Dendritic cell treated with granulocyte-macrophage colony-stimulating factor and Interleukin-4, amounts not matched to agents 40 ng/mL and 50 ng/mL, for 4 days (primary cell): ENCODE measurements at regions of chr20 and their contacts with region 1.

Region 1: DNA sequence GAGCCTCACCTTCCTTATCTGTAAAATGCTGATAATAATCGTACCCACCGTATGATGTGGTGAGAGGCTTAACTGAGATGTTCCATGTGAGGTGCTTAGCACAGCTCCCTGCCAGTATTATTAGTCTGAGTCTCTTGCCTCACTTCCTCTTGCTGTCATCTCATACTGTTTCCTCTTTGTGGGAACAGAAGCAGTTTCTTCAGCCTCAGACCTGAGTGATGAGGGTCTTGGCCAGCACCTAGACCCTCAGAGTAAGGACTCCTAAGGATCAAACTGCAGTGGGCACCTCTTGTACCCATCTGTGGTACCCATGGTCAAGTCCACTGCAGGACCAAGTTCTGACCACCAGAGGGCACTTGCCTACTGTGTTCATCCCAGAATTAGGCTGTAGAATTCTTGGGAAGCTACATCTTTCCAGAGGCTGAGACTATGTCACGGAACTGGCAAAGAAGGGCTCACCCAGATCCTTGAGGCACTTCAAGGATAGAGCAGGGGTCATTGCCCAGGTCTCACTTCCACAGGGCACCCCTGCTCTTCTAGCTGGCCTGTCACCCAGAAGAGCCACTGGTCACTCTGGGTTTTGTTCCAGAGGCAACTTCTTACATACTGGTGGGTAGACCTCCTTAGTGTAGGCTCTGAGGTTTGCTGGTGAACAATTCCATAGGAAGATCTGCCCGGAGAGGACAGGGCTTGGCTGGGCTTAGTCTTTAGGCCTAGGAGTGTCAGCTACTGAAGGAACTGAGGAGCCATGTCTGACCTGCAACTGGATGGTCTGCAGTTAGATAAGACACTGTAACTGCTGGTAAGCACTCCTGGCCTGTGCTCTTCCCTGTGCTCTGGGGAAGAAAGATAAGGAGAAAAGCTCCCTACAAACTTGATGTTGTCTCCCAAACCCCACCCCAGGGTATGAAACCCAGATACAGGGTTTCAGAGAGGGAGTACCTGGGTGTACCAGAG is 20.6 kb upstream of the SGK2 start:
- H3K4me3 Mint-ChIP-seq: no peak overlapping the region
- H3K27ac Mint-ChIP-seq: no peak overlapping the region
- H3K4me1 Mint-ChIP-seq: peaks cover 5% of the 10 kb centered on the region
- H3K27me3 Mint-ChIP-seq: no peaks in the 10 kb centered on the region

Region 2: DNA sequence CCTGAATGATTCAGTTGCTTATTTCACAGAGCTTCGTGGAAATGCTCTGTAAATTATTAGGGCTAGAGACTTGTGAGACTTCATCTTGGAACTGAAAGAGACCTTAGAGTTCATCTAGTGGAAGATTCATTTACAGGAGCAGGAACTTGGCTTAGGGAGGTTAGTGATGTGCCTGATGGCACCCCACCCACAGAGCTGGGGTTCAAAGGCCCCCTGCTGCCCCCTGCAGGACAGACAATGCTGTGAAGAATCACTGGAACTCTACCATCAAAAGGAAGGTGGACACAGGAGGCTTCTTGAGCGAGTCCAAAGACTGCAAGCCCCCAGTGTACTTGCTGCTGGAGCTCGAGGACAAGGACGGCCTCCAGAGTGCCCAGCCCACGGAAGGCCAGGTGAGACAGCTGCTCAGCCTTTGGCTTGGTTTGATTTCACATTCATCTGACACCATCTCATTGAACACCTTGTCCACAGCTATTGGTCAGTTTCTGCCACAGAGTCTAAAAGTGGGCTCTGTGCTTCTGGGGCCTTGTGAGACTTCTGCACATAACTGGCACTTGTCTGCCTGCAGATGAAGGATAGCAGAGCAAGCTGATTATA is 153.8 kb after region 1 on chr20:
- intact Hi-C with region 1: loop called (anchors 1 kb)
- H3K4me3 Mint-ChIP-seq: no peak overlapping the region
- H3K27ac Mint-ChIP-seq: no peak overlapping the region
- H3K4me1 Mint-ChIP-seq: no peaks in the 10 kb centered on the region
- H3K27me3 Mint-ChIP-seq: no peaks in the 10 kb centered on the region

Region 3: DNA sequence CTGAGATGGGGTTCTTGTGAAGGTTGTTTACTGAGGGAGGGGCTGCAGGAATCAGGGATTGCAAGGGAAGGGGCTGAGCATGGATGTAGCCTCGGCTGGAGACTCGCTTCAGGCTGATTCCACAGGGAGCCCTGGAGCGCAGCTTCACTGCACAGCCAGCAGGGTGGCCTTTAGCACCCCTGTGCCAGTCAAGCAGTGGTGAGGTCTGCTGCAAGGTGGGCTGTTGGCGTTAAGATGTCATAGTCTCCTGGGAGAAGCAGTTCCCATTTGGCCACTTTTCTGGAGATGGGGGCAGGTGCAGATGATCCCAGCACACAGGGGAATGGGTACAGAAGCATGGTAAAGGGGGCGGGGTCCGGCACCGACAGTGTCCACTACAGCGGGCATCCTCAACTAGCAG is 502.8 kb after region 1 on chr20:
- intact Hi-C with region 1: no loop called
- H3K4me3 Mint-ChIP-seq: no peak overlapping the region
- H3K27ac Mint-ChIP-seq: no peak overlapping the region
- H3K4me1 Mint-ChIP-seq: no peaks in the 10 kb centered on the region
- H3K27me3 Mint-ChIP-seq: peaks cover 59% of the 10 kb centered on the region

Region 4: GRCh38 chr20:44080646-44081267 is 542.6 kb after region 1 on chr20:
- intact Hi-C with region 1: loop called (anchors 1 kb)
- H3K4me3 Mint-ChIP-seq: no peak overlapping the region
- H3K27ac Mint-ChIP-seq: no peak overlapping the region
- H3K4me1 Mint-ChIP-seq: peaks cover under 1% of the 10 kb centered on the region
- H3K27me3 Mint-ChIP-seq: peaks cover 4% of the 10 kb centered on the region